ENCODE measurements at regions of chr9 and their contacts with region 1.

Region 1: GRCh38 chr9:128296337-128297220 is 20.5 kb downstream of the SWI5 start:
- DNase-seq: no peak

Region 2: GRCh38 chr9:128020692-128021091 is 275.9 kb before region 1 on chr9:
- intact Hi-C with region 1: no loop called
- DNase-seq: no peak

Region 3: DNA sequence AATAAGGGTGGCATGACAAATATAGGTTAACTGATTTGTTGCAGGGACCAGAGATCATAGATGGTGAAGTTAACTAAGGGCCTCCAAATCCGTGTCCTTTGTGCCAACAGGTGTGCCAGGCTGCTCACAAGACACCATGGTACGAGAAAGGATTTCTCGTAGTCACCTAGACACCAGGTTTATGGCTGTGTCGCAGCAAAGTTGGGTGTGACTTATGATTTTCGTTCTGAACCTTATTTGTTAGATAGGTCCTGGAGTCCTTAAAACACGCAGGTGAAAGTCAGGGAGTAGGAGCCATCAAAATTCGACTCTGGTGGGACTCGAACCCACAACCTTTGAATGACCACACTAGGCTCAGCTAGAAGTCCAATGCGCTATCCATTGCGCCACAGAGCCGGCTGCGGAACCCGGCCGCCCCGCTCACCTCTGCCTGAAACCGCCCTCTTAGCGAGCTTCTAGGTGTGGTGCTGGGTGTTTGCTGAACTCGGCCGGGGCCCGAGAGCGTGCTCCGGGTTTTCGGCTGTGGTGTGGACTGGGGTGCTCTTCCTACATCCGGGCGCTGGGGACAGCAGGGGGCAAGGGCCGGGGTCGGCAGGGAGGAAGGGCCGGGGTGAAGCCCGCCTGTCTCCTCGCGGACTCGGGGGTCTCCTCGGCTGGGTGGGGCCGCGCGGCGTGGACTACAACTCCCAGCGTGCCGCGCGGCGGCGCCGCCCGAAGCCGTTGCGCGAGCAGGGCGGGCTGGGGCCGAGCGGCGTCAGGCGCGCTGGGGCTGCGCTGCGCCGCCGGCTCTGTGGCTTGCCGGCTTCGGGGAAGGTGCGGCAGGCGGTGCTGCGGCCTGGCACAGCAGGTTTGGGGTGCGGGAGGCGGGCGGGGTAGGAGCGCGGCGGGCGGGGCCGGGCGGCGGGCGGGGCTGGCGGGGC is 43.5 kb after region 1 on chr9 and contains the start of gene SLC27A4:
- intact Hi-C with region 1: loop called (anchors 5 kb)
- DNase-seq: peak; percentile 19 to 91 (median 79)

Region 4: GRCh38 chr9:128494108-128494745 is 197.6 kb after region 1 on chr9:
- intact Hi-C with region 1: no loop called
- DNase-seq: peak in 22 of 42 donors; percentile 15 to 65 (median 30)